GM23248 (cell line): ENCODE measurements at regions of chr1 and their contacts with region 1.

Region 1: GRCh38 chr1:87292684-87293493 is 35.8 kb upstream of the LMO4 start:
- DNase-seq: peak; percentile 74
- H3K4me3 ChIP-seq: no peak overlapping the region
- H3K27ac ChIP-seq: no peak overlapping the region
- H3K4me1 ChIP-seq: peaks cover 5% of the 10 kb centered on the region; the same call in 1 of the 2 replicates
- H3K27me3 ChIP-seq: no peaks in the 10 kb centered on the region

Region 2: DNA sequence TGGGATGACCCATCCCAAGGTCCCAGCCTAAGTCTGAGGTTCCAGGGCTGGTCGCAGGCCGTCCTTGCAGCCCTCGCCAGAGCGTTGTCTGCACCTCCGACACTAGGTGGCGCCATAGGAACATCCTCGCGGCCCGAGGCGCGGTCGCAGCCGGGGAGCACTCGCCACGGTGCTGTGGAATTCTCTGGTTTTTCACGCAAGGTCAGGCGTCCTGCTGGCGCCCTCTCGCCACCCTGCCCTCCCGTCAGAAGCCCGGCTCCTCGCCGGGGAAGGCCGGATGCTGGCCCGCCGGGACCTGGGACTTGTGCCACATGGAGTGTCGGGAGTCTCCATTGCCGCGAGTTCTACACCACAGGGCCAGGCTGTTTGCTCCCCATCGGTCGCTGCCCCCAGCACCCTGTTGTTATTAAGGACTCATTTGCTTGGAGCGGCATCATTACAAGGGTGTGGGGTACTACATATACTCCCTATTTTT is 161.0 kb before region 1 on chr1:
- in situ Hi-C with region 1: loop called (anchors 25 kb)
- DNase-seq: peak; percentile 89
- H3K4me3 ChIP-seq: peak overlapping the region; percentile 70
- H3K27ac ChIP-seq: no peak overlapping the region
- H3K4me1 ChIP-seq: 0 out of 2 replicates have a peak, but pooled peaks cover 6% of the 10 kb centered on the region
- H3K27me3 ChIP-seq: no peaks in the 10 kb centered on the region

Region 3: GRCh38 chr1:87348341-87348999 is 55.6 kb after region 1 on chr1:
- in situ Hi-C with region 1: no loop called
- DNase-seq: no peak
- H3K4me3 ChIP-seq: no peak overlapping the region
- H3K27ac ChIP-seq: no peak overlapping the region
- H3K4me1 ChIP-seq: no peaks in the 10 kb centered on the region
- H3K27me3 ChIP-seq: no peaks in the 10 kb centered on the region

Region 4: DNA sequence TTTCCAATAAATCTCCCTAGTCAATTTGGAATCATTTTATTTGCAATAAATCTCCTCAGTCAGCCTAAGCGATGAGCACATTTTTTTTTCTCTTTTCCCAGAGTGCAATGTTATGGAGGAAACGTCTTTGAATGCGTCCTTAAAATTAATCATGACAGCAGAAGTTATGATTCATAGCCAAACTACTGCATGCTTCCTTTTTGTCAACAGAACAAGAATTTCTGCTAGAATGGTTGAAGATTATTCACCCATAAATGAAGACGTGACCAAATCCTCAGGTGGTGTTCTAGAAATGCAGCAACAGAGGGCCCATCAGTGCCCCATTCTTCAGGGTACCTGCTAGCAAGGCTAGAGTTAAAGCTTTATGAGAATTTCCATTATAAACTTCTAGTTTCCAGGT is 983.3 kb after region 1 on chr1:
- in situ Hi-C with region 1: loop called (anchors 25 kb)
- DNase-seq: peak; percentile 57
- H3K4me3 ChIP-seq: no peak overlapping the region
- H3K27ac ChIP-seq: no peak overlapping the region
- H3K4me1 ChIP-seq: no peaks in the 10 kb centered on the region
- H3K27me3 ChIP-seq: no peaks in the 10 kb centered on the region